ENCODE measurements at regions of chr6 and their contacts with region 1.

Region 1: GRCh38 chr6:154223296-154223695 is 133.3 kb downstream of the IPCEF1 start:
- DNase-seq: no peak
- ATAC-seq: no peak
- H3K4me3 Mint-ChIP-seq: no peak overlapping the region
- H3K27ac Mint-ChIP-seq: no peak overlapping the region
- H3K4me1 Mint-ChIP-seq: peaks cover 43% of the 10 kb centered on the region
- H3K27me3 Mint-ChIP-seq: no peaks in the 10 kb centered on the region

Region 2: GRCh38 chr6:153804755-153805330 is 418.5 kb before region 1 on chr6:
- CTCF ChIA-PET with region 1: no interaction called
- POLR2A ChIA-PET with region 1: no interaction called
- DNase-seq: no peak
- ATAC-seq: no peak
- H3K4me3 Mint-ChIP-seq: no peak overlapping the region
- H3K27ac Mint-ChIP-seq: no peak overlapping the region
- H3K4me1 Mint-ChIP-seq: no peaks in the 10 kb centered on the region
- H3K27me3 Mint-ChIP-seq: no peaks in the 10 kb centered on the region

Region 3: DNA sequence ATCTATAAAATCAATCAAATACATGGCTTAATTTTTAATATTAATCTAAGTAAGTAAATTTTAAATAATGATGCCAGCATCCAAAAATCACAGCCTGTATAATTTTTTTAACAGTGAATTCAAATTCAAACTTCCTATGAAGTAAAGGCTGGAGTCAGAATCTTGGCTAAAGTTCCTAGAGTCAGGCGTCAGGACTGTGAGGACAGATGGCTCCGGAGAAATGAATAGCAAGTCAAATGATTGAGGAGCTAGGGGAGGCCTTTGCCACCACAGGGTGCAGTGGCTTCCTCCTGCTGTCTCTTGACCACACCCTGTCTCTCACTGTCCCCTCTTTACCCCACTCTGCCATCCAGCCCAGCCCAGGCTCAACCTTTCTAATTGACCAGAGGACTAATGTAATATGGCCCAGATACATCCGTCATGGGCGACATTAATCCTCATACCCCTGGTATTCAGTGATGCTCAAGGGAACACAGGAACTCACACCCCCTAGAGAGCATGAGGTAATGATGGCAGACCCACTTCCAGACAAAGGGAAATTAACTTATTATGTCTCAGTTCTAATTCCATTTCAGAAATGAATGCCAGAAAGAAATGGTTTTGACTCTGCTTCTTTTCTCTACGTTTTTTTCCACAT is 130.9 kb before region 1 on chr6:
- CTCF ChIA-PET with region 1: no interaction called
- POLR2A ChIA-PET with region 1: no interaction called
- DNase-seq: no peak
- ATAC-seq: no peak
- H3K4me3 Mint-ChIP-seq: no peak overlapping the region
- H3K27ac Mint-ChIP-seq: no peak overlapping the region
- H3K4me1 Mint-ChIP-seq: no peaks in the 10 kb centered on the region
- H3K27me3 Mint-ChIP-seq: no peaks in the 10 kb centered on the region

Region 4: GRCh38 chr6:154202958-154203357 is 20.3 kb before region 1 on chr6:
- CTCF ChIA-PET with region 1: no interaction called
- POLR2A ChIA-PET with region 1: no interaction called
- DNase-seq: no peak
- ATAC-seq: no peak
- H3K4me3 Mint-ChIP-seq: no peak overlapping the region
- H3K27ac Mint-ChIP-seq: no peak overlapping the region
- H3K4me1 Mint-ChIP-seq: peaks cover 8% of the 10 kb centered on the region
- H3K27me3 Mint-ChIP-seq: no peaks in the 10 kb centered on the region

Region 5: DNA sequence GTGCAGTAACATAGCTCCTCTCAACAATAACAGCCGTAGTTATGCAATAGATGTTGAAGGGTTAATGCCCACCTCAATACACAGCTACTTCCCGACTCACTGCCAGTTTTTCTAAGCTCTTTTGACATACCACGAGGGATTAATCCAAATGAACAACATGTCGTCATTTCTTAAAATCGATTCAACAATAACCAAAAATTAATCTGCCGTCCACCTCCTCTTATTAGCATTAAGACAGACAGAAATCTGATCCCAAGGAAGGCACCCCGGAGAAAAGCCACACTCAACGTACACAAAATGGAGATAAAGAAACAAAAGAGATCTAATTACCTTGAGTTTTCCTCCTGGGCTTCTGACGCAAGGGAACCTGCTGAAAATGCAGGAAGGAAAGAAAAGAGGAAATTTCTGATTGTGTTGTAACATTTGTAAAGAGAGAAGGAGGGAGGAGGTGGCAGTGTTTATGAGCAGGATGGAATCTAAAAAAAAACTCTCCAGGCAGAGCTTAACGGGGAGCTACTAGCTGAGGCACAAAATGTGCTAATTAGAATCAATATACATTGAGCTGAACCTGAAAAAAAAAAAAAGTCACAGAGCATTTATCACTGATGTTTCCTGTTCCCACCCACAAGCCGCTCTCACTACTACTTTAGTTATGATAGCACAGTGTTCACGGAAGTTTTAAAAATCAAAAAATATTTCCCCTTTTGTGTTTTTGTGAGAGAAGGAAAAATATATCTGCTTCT is 24.0 kb after region 1 on chr6:
- CTCF ChIA-PET with region 1: interaction called, 12 read pairs
- POLR2A ChIA-PET with region 1: interaction called, 4 read pairs
- DNase-seq: peak; percentile 62
- ATAC-seq: peak; percentile 62
- H3K4me3 Mint-ChIP-seq: peak overlapping the region; percentile 85
- H3K27ac Mint-ChIP-seq: peak overlapping the region; percentile 90
- H3K4me1 Mint-ChIP-seq: peaks cover 82% of the 10 kb centered on the region
- H3K27me3 Mint-ChIP-seq: no peaks in the 10 kb centered on the region

Region 6: DNA sequence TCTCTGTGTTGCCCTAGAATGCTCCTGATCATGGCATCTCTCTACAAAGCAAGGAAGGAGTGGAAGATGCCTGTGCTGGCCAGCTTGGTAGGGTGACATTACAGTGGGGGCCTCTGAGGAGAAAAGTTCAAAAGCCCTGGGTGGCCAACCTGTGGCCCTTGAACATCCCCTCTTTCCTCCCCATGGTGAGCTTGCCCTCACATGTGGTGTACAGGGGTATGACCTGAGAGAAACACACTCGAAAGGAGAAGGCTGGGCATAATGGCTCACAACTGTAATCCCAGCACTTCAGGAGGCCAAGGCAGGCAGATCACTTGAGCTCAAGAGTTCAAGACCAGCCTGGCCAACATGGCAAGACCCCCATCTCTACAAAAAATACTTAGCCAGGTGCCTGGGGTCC is 473.4 kb after region 1 on chr6:
- CTCF ChIA-PET with region 1: no interaction called
- POLR2A ChIA-PET with region 1: no interaction called
- DNase-seq: no peak
- ATAC-seq: no peak
- H3K4me3 Mint-ChIP-seq: no peak overlapping the region
- H3K27ac Mint-ChIP-seq: no peak overlapping the region
- H3K4me1 Mint-ChIP-seq: no peaks in the 10 kb centered on the region
- H3K27me3 Mint-ChIP-seq: peaks cover 4% of the 10 kb centered on the region

Measured in activated CD8-positive, alpha-beta T cell treated with anti-CD3 and anti-CD28 coated beads, Interleukin-2, amount 10 ng/mL, durations not matched to agents 7 days and 5 days (primary cell).